ENCODE measurements at regions of chr9 and their contacts with region 1.

Region 1: GRCh38 chr9:133726401-133727276 is 11.5 kb downstream of the SARDH start:
- DNase-seq: peak in 1 of 2 donors; percentile 83
- H3K4me3 ChIP-seq: no peak overlapping the region
- CTCF ChIP-seq: no peak
- POLR2A ChIP-seq: no peak

Region 2: GRCh38 chr9:133532937-133533668 is 193.5 kb before region 1 on chr9:
- intact Hi-C with region 1: loop called (anchors 10 kb)
- DNase-seq: peak in 1 of 2 donors; percentile 33
- H3K4me3 ChIP-seq: no peak overlapping the region
- CTCF ChIP-seq: peak in 1 of 3 donors; percentile 93
- POLR2A ChIP-seq: no peak

Measured in lower leg skin (tissue), 4 donors.